GM12878 (cell line): ENCODE measurements at regions of chr19 and their contacts with region 1.

Region 1: GRCh38 chr19:680287-681028 is 4.3 kb downstream of the FSTL3 start:
- DNase-seq: peak; percentile 93
- ATAC-seq: peak; percentile 87
- H3K4me3 ChIP-seq: peak overlapping the region; percentile 78; the same call in 1 of the 2 replicates
- H3K27ac ChIP-seq: peak overlapping the region; percentile 84
- H3K4me1 ChIP-seq: peaks cover 11% of the 10 kb centered on the region
- H3K27me3 ChIP-seq: no peaks in the 10 kb centered on the region
- CTCF ChIP-seq: peak; percentile 45 to 70 (median 46); a peak in 5 of 6 replicates
- EP300 ChIP-seq: no peak
- POLR2A ChIP-seq: peak; percentile 82
- RAD21 ChIP-seq: no peak

Region 2: DNA sequence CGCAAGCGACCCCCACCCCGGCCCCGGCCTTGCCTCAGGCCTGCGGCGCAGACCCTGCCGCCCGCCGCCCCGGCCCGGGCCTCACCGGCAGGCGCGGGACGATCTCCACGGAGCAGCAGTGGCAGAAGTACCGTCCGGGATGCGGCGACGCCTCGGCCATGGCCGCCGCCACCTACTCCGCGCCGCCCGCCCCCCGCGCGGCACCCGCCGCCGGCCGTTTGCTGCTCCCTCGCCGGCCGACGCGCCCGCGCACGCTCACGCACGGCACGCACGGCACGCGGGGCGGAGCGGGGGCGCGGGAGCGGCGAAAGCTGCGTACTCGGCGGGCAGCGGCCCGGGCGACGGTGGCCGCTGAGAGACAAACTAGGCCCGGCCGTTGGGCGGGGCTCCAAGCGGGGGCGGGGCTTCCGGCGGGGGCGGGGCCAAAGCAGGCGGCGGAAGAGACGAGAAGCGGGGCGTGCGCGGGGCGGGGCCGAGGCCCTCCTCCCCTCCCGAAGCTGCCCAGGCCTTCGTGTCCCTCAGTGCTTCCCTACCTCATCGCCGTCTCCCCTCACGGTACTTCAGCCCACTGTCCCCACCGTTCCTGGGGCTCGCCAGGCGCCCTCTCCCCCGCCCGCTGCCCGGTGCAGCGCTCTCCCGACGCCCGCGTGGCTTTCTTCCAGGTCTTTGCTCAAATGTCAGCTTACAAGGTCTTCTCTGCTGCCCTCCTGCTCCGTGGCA is 17.3 kb before region 1 on chr19 and contains the start of gene RNF126:
- CTCF ChIA-PET with region 1: interaction called, 4 read pairs
- POLR2A ChIA-PET with region 1: no interaction called
- RAD21 ChIA-PET with region 1: interaction called, 8 read pairs
- SMC1A ChIA-PET with region 1: interaction called, 3 read pairs
- in situ Hi-C with region 1: no loop called
- intact Hi-C with region 1: loop called (anchors 2 kb)
- DNase-seq: no peak
- ATAC-seq: peak; percentile 64
- H3K4me3 ChIP-seq: peak within 1 kb of the TSS; percentile 98
- H3K27ac ChIP-seq: peak within 1 kb of the TSS; percentile 90
- H3K4me1 ChIP-seq: peaks cover 19% of the 10 kb centered on the region
- H3K27me3 ChIP-seq: no peaks in the 10 kb centered on the region
- CTCF ChIP-seq: no peak
- EP300 ChIP-seq: no peak
- POLR2A ChIP-seq: peak; percentile 81
- RAD21 ChIP-seq: no peak
- polyA plus RNA-seq, gene RNF126: 0.45 to 0.73 TPM

Region 3: GRCh38 chr19:703651-704446 is 23.4 kb after region 1 on chr19:
- CTCF ChIA-PET with region 1: no interaction called
- POLR2A ChIA-PET with region 1: no interaction called
- RAD21 ChIA-PET with region 1: no interaction called
- SMC1A ChIA-PET with region 1: no interaction called
- in situ Hi-C with region 1: no loop called
- intact Hi-C with region 1: loop called (anchors 2 kb)
- DNase-seq: no peak
- ATAC-seq: peak; percentile 78
- H3K4me3 ChIP-seq: no peak overlapping the region
- H3K27ac ChIP-seq: no peak overlapping the region
- H3K4me1 ChIP-seq: no peaks in the 10 kb centered on the region
- H3K27me3 ChIP-seq: peaks cover 0 to 2% of the 10 kb centered on the region in 2 experiments; a peak in 2 of 4 replicates
- CTCF ChIP-seq: no peak
- EP300 ChIP-seq: no peak
- POLR2A ChIP-seq: no peak
- RAD21 ChIP-seq: no peak

Region 4: GRCh38 chr19:732148-733069 is 52.0 kb after region 1 on chr19:
- CTCF ChIA-PET with region 1: interaction called, 10 read pairs
- POLR2A ChIA-PET with region 1: interaction called, 5 read pairs
- RAD21 ChIA-PET with region 1: interaction called, 4 read pairs
- SMC1A ChIA-PET with region 1: interaction called, 5 read pairs
- in situ Hi-C with region 1: no loop called
- intact Hi-C with region 1: no loop called
- DNase-seq: no peak
- ATAC-seq: peak; percentile 28
- H3K4me3 ChIP-seq: no peak overlapping the region
- H3K27ac ChIP-seq: no peak overlapping the region
- H3K4me1 ChIP-seq: peaks cover 5% of the 10 kb centered on the region
- H3K27me3 ChIP-seq: no peaks in the 10 kb centered on the region
- CTCF ChIP-seq: no peak
- EP300 ChIP-seq: no peak
- POLR2A ChIP-seq: no peak
- RAD21 ChIP-seq: no peak